HEK293 (cell line): ENCODE measurements at regions of chr10 and their contacts with region 1.

Region 1: DNA sequence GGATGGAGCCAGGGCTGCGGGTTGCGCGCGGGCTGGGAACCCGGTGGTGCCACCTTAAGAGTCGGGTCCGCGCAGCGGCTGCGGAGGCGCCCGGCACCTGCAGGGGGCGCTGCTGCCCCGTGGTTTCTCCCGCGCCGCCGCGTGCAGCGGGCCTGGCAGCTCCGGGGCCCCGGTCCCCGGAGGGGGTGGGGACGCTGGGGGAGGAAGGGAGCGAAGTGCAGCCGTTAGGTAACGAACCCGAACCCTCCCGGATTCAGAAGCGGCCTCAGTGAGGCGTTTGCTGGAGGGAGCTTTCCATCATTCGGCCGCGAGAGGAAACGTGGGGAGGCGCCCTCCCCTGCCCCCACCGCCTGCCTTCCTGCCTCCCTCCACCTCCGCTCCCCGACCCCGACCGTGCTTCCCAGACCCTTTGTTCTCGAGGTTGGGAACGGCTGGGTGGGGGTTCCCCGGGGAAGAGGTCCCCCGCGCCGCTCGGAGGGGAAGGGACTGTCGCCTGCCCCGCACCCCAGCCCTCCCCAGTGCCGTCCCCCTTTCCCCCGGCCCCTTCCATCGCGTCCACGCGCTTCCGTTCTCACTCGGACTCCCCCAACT is 29.6 kb downstream of the SKIDA1 start:
- H3K4me3 ChIP-seq: peak overlapping the region; percentile 81
- H3K27ac ChIP-seq: peak overlapping the region; percentile 99
- H3K4me1 ChIP-seq: no peaks in the 10 kb centered on the region
- CTCF ChIP-seq: peak; percentile 86

Region 2: GRCh38 chr10:21278491-21279239 is 217.2 kb before region 1 on chr10:
- CTCF ChIA-PET with region 1: interaction called, 16 read pairs
- POLR2A ChIA-PET with region 1: interaction called, 5 read pairs
- H3K4me3 ChIP-seq: no peak overlapping the region
- H3K27ac ChIP-seq: no peak overlapping the region
- H3K4me1 ChIP-seq: peaks cover 3% of the 10 kb centered on the region; the same call in 1 of the 2 replicates
- CTCF ChIP-seq: peak; percentile 74

Region 3: GRCh38 chr10:21516242-21517131 is 20.6 kb after region 1 on chr10:
- CTCF ChIA-PET with region 1: interaction called, 6 read pairs
- POLR2A ChIA-PET with region 1: interaction called, 23 read pairs
- H3K4me3 ChIP-seq: peak overlapping the region; percentile 65
- H3K27ac ChIP-seq: peak overlapping the region; percentile 85
- H3K4me1 ChIP-seq: peaks cover 31% of the 10 kb centered on the region
- CTCF ChIP-seq: no peak

Region 4: DNA sequence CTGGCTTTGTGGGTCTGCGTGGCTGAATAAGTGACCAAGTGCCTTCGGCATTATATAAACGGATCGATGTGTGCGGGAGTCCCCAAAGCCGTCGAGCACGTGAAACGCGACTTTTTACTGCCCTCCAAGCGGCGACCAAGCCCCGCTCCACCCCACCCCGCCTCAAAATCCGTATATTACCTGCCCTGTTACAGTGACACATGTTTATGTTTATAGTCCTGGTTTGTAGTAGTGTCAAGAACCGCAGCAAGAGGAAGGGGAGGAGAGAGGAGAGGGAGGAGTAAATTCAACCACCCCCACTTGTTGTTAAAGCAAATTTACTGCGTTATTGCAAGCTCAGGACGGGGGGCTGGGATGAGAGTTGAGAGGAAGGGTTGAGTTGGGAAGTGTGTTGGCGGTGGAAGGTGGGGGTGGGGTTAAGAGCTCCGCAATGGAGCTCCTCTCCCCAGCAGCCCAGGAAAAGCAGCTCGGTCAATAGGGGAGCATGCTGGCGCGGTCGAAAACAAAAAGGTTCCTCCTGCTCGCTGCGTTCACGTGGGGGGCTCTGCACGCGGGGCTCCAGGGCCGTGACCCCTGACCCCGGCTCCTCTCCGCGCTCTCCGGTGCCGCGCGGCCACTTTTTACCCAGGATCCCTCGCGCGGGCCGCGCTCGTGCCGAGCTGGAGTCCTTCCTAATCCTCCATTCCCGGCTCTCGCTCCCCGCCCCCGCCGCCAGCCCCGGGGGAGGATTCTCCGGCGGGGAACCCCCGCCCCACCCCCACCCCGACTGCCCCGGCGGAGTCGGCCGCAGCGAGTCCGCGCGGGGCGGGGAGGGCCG is 29.7 kb after region 1 on chr10 and contains the start of gene SKIDA1:
- CTCF ChIA-PET with region 1: interaction called, 9 read pairs
- POLR2A ChIA-PET with region 1: interaction called, 28 read pairs
- H3K4me3 ChIP-seq: peak within 1 kb of the TSS; percentile 58
- H3K27ac ChIP-seq: peak within 1 kb of the TSS; percentile 98
- H3K4me1 ChIP-seq: peaks cover 18% of the 10 kb centered on the region; the same call in 1 of the 2 replicates
- CTCF ChIP-seq: no peak

Region 5: GRCh38 chr10:21533467-21534279 is 37.8 kb after region 1 on chr10 and contains the start of gene MLLT10:
- CTCF ChIA-PET with region 1: interaction called, 9 read pairs
- POLR2A ChIA-PET with region 1: interaction called, 17 read pairs
- H3K4me3 ChIP-seq: peak within 1 kb of the TSS; percentile 63
- H3K27ac ChIP-seq: peak within 1 kb of the TSS; percentile 89
- H3K4me1 ChIP-seq: peaks cover 9% of the 10 kb centered on the region
- CTCF ChIP-seq: peak; percentile 75

Region 6: DNA sequence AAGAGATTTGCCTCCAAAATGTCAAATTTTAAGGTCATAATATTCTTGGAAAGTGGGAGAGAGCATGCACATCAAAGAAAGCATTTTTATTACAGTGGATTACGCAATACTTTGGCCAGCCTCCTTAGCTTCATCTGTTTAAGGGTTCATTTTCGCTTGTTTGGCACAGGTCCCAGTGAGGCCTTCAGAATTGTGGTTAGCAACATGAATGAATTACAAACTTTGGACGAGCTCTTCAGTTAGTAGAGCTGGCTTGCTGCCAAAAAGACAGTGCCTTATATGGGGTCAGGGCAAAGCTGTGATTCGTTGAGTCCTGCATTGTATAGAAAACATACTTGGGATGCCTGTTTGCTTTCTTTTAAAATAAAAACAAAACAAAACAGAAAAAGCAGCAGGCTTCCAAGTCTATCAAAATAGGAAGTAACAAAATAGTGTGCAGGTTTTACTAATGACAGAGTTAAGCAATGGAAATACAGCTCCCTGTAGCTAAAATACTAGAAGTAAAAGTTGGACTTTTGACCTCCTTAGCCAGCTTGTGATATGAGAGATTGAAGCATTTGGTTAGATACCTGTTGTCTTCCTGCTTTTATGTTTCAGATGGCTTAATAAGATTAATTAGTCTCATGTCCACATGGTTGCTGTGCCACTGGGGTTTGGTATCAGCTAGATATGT is 229.0 kb after region 1 on chr10:
- CTCF ChIA-PET with region 1: interaction called, 7 read pairs
- POLR2A ChIA-PET with region 1: interaction called, 17 read pairs
- H3K4me3 ChIP-seq: no peak overlapping the region
- H3K27ac ChIP-seq: no peak overlapping the region
- H3K4me1 ChIP-seq: peaks cover 32% of the 10 kb centered on the region
- CTCF ChIP-seq: no peak

Region 7: DNA sequence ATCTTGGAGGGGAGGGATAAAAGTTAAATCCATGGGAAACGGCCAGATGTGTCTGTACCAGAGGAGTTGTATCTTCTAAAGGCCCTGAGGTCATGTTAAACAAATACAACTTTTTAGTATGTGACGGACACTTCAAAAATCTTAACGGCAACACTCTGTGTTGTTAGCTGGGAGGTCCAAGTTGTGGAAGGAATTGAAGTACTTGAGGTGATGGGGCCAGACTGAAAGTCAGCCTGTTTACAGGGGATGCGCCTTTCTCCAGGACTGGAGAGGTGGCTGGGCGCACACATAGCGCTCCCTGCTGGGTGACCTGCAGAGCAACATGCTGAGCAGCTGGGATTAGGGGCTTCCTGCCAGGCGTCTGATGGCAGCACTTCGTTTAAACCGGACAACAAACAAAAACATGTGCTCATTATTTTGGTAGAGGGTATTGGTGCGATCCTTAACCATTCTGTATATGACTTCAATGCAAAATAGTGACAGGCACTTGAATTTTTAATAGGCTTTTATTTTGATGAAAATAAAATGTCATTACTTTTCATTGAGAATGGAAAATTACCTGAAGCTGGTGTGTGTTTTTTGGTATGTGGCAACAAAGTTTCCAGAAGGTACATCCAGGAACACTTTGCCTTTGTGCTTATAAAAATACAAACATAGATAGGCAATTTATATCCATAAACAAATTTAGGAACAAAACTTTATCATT is 236.4 kb after region 1 on chr10:
- CTCF ChIA-PET with region 1: interaction called, 32 read pairs
- POLR2A ChIA-PET with region 1: interaction called, 25 read pairs
- H3K4me3 ChIP-seq: no peak overlapping the region
- H3K27ac ChIP-seq: no peak overlapping the region
- H3K4me1 ChIP-seq: peaks cover 8% of the 10 kb centered on the region
- CTCF ChIP-seq: no peak; the same call in 1 of the 2 replicates